H1 (cell line): ENCODE measurements at regions of chr1 and their contacts with region 1.

Region 1: GRCh38 chr1:21368515-21369289 is 71.2 kb upstream of the NBPF3 start:
- DNase-seq: peak; percentile 56 to 85
- H3K4me3 ChIP-seq: no peak overlapping the region
- H3K27ac ChIP-seq: no peak overlapping the region
- H3K4me1 ChIP-seq: no peaks in the 10 kb centered on the region; a peak in 1 of 7 replicates
- H3K27me3 ChIP-seq: no peaks in the 10 kb centered on the region
- CTCF ChIP-seq: peak; percentile 96 to 98 (median 98)
- EP300 ChIP-seq: no peak
- POLR2A ChIP-seq: no peak
- RAD21 ChIP-seq: peak; percentile 100

Region 2: DNA sequence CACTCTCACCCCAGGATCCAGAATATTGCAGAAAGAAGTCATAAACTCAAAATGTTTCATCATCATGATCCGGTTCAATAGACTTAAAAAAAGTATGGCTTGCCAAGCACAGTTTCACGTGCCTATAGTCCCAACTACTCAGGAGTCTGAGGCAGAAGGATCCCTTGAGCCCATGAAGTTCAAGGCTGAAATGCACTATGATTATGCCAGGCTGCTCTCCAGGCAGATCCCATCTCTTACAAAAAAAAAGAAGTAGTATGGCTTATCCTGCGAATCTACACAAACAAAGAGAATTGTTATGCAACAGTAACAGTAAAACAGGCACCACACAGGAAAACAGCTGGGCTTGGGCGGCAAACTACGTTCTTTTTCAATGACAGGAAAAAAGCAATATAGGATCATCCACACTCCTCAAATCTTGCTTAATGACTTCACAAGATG is 268.2 kb before region 1 on chr1:
- CTCF ChIA-PET with region 1: no interaction called
- POLR2A ChIA-PET with region 1: no interaction called
- DNase-seq: no peak
- H3K4me3 ChIP-seq: no peak overlapping the region
- H3K27ac ChIP-seq: no peak overlapping the region
- H3K4me1 ChIP-seq: peaks cover 0 to 9% (median 5%) of the 10 kb centered on the region in 4 experiments; a peak in 4 of 7 replicates
- H3K27me3 ChIP-seq: no peaks in the 10 kb centered on the region
- CTCF ChIP-seq: no peak
- EP300 ChIP-seq: no peak
- POLR2A ChIP-seq: no peak
- RAD21 ChIP-seq: no peak

Region 3: GRCh38 chr1:21244986-21245687 is 123.6 kb before region 1 on chr1:
- CTCF ChIA-PET with region 1: interaction called, 199 read pairs
- POLR2A ChIA-PET with region 1: no interaction called
- DNase-seq: peak in 1 of 2 experiments; percentile 82
- H3K4me3 ChIP-seq: no peak overlapping the region
- H3K27ac ChIP-seq: no peak overlapping the region
- H3K4me1 ChIP-seq: peaks cover 0 to 2% (median 0%) of the 10 kb centered on the region in 4 experiments; a peak in 3 of 7 replicates
- H3K27me3 ChIP-seq: no peaks in the 10 kb centered on the region
- CTCF ChIP-seq: peak; percentile 84 to 88 (median 87)
- EP300 ChIP-seq: no peak
- POLR2A ChIP-seq: no peak
- RAD21 ChIP-seq: peak; percentile 46 to 55

Region 4: DNA sequence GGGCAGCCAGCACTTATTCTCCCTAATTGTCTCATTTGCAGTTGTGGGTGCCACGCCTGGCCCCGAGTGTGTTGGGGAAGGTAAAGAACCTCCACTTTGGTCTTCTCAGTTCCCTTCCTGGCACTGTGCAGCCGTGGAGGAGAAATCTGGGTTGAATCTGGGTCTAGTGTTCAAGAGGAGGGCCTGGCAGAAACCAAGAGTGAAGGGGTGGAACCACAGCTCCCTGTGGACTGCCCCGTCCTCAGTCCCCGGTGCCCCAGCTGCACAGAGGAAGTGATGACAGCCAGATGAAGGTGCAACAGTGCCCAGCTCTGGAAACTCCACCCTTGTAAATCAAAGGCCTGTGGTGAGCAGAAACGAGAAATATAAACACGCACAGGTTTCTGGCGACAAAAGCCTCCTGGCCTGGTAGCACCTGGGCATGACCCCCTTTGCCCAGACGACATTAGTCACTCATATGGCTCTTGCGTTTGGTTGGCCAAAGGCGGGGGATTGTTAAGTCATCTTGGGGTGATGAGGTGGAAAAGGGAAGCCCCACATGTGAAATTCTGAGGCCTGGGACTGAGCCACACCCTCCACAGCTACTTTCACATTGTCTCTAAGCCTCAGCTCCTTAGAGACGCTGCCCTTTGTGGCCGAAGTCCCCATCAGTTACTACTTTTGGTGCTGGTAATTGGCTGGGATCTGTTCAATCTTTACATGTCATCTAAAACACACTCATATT is 74.3 kb before region 1 on chr1:
- CTCF ChIA-PET with region 1: interaction called, 15 read pairs
- POLR2A ChIA-PET with region 1: no interaction called
- DNase-seq: no peak
- H3K4me3 ChIP-seq: no peak overlapping the region
- H3K27ac ChIP-seq: no peak overlapping the region
- H3K4me1 ChIP-seq: peaks cover 0 to 18% (median 14%) of the 10 kb centered on the region in 4 experiments; a peak in 6 of 7 replicates
- H3K27me3 ChIP-seq: no peaks in the 10 kb centered on the region
- CTCF ChIP-seq: no peak
- EP300 ChIP-seq: no peak
- POLR2A ChIP-seq: no peak
- RAD21 ChIP-seq: no peak

Region 5: DNA sequence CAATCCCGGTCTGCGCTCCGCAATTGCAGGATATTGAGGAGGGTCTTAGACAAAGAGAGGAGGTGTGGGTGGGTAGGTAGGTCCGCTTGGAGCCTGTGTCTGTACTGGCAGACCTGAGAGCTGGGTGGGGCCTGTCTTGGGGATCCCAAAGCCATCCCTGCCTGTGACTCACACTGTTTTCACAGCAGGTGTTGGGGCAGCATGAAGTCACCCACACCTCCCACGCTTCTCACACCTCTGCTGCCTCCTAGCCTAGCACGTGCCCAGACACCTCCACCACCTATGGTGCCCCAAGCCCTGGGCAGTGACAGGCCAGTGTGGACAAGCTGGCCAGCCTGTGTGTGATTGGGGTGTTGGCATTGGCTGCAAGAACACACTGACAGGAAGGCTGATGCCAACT is 12.7 kb before region 1 on chr1:
- CTCF ChIA-PET with region 1: interaction called, 123 read pairs
- POLR2A ChIA-PET with region 1: no interaction called
- DNase-seq: no peak
- H3K4me3 ChIP-seq: no peak overlapping the region
- H3K27ac ChIP-seq: no peak overlapping the region
- H3K4me1 ChIP-seq: peaks cover 0 to 2% (median 0%) of the 10 kb centered on the region in 4 experiments; a peak in 1 of 7 replicates
- H3K27me3 ChIP-seq: no peaks in the 10 kb centered on the region
- CTCF ChIP-seq: no peak
- EP300 ChIP-seq: no peak
- POLR2A ChIP-seq: no peak
- RAD21 ChIP-seq: no peak

Region 6: DNA sequence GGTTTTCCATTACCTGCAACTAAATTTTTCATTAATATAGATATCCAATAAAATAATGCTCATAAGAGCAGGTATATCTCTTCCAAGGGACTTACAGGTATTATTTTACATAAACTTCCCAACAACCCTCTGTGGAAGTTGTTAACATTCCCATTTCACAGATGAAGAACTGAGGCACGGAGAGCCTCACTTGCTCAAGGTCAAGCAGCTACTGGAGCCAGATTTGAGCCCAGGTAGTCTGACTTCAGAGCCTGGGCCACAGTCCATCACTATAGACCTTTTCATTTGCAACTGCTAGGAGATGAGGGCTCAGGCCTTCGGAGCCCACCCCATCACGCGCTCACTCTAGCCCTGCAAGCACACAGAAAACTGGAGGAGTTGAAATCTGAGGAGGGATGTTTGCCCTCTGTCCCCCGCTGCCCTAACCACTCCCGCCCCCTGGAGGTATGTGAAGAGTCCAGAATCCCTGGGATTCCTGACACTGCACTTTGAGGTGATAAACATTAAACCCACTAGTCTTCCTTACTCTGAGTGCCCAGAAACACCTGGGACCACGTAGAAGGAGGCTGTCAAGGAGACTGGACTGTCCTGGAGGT is 128.9 kb after region 1 on chr1:
- CTCF ChIA-PET with region 1: interaction called, 72 read pairs
- POLR2A ChIA-PET with region 1: no interaction called
- DNase-seq: peak in 1 of 2 experiments; percentile 70
- H3K4me3 ChIP-seq: no peak overlapping the region
- H3K27ac ChIP-seq: no peak overlapping the region
- H3K4me1 ChIP-seq: peaks cover 0 to 5% (median 4%) of the 10 kb centered on the region in 4 experiments; a peak in 6 of 7 replicates
- H3K27me3 ChIP-seq: no peaks in the 10 kb centered on the region; a peak in 1 of 7 replicates
- CTCF ChIP-seq: peak; percentile 45 to 51 (median 49)
- EP300 ChIP-seq: no peak
- POLR2A ChIP-seq: no peak
- RAD21 ChIP-seq: peak; percentile 55 to 65

Region 7: DNA sequence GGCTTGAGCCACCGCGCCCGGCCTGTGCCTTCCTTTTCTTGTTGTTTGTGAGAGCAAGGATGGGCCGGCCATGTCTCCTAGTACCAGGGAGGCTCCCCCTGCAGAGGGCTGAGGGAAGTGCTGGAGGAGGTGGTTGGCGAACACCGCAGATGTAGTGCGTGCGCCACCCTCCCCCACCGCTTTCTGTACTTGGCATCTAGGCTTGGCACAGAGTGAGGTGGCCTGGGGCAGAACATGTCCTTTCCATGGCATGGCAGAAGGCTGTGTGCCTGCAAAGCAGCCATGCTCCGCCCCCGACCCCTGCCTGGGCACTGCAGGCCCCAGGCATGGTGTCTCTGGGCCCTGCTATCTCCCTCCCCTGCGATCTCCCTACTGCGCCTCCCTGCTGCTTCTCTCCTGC is 171.2 kb after region 1 on chr1:
- CTCF ChIA-PET with region 1: interaction called, 21 read pairs
- POLR2A ChIA-PET with region 1: no interaction called
- DNase-seq: peak in 1 of 2 experiments; percentile 87
- H3K4me3 ChIP-seq: no peak overlapping the region
- H3K27ac ChIP-seq: no peak overlapping the region
- H3K4me1 ChIP-seq: peaks cover 10 to 24% (median 16%) of the 10 kb centered on the region in 4 experiments
- H3K27me3 ChIP-seq: no peaks in the 10 kb centered on the region
- CTCF ChIP-seq: peak; percentile 62 to 87 (median 79)
- EP300 ChIP-seq: no peak
- POLR2A ChIP-seq: no peak
- RAD21 ChIP-seq: peak; percentile 20 to 55; a peak in 3 of 4 replicates

Region 8: GRCh38 chr1:21779613-21780521 is 411.2 kb after region 1 on chr1:
- CTCF ChIA-PET with region 1: no interaction called
- POLR2A ChIA-PET with region 1: no interaction called
- DNase-seq: no peak
- H3K4me3 ChIP-seq: no peak overlapping the region
- H3K27ac ChIP-seq: no peak overlapping the region
- H3K4me1 ChIP-seq: peaks cover 0 to 2% (median 1%) of the 10 kb centered on the region in 4 experiments; a peak in 3 of 7 replicates
- H3K27me3 ChIP-seq: no peaks in the 10 kb centered on the region
- CTCF ChIP-seq: no peak
- EP300 ChIP-seq: no peak
- POLR2A ChIP-seq: no peak
- RAD21 ChIP-seq: no peak